ENCODE measurements at regions of chr19 and their contacts with region 1.

Region 1: GRCh38 chr19:12796146-12797071 is 5.1 kb downstream of the JUNB start:
- H3K4me3 Mint-ChIP-seq: peak overlapping the region; percentile 70
- H3K27ac Mint-ChIP-seq: no peak overlapping the region
- H3K4me1 Mint-ChIP-seq: peaks cover 39% of the 10 kb centered on the region
- H3K27me3 Mint-ChIP-seq: peaks cover 8% of the 10 kb centered on the region

Region 2: GRCh38 chr19:12757544-12758274 is 38.7 kb before region 1 on chr19:
- intact Hi-C with region 1: loop called (anchors 1 kb)
- H3K4me3 Mint-ChIP-seq: peak overlapping the region; percentile 49
- H3K27ac Mint-ChIP-seq: no peak overlapping the region
- H3K4me1 Mint-ChIP-seq: peaks cover 11% of the 10 kb centered on the region
- H3K27me3 Mint-ChIP-seq: peaks cover 34% of the 10 kb centered on the region

Region 3: DNA sequence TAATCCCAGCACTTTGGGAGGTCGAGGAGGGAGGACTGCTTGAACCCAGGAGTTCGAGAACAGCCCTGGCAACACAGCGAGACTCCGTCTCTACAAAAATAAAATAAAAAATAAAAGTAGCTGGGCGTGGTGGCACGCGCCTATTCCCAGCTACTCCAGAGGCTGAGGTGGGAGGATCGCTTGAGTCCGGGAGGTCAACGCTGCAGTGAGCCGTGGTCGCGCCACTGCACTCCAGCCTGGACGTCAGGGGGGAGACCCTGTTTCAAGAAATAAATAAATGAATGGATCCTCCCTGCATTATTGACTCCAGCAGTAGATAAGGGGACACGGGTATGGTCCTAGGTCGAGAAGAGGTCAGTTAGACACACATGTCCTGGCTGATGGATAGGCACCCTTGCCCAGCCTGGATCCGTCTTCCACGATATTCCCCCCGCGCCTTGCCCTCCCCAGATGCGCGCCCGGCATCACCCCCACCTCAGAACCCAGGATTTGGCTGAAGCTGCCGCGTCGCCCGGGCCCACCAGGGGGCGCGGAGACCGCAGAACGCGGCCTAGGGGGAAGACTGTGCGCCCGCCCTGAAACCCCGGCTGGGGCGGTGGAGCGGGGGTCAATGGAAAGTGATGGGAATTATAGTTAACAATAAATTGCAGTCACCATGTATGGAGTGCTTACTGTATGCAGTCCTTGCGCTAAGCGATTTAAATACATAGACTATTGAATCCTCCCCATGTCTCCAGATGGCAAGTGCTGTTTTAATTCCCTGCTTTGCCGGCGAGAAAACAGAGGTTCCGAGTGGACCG is 19.0 kb before region 1 on chr19:
- intact Hi-C with region 1: loop called (anchors 1 kb)
- H3K4me3 Mint-ChIP-seq: peak overlapping the region; percentile 83
- H3K27ac Mint-ChIP-seq: peak overlapping the region; percentile 91
- H3K4me1 Mint-ChIP-seq: peaks cover 57% of the 10 kb centered on the region
- H3K27me3 Mint-ChIP-seq: no peaks in the 10 kb centered on the region